Calu3 (cell line): ENCODE measurements at regions of chr10 and their contacts with region 1.

Region 1: DNA sequence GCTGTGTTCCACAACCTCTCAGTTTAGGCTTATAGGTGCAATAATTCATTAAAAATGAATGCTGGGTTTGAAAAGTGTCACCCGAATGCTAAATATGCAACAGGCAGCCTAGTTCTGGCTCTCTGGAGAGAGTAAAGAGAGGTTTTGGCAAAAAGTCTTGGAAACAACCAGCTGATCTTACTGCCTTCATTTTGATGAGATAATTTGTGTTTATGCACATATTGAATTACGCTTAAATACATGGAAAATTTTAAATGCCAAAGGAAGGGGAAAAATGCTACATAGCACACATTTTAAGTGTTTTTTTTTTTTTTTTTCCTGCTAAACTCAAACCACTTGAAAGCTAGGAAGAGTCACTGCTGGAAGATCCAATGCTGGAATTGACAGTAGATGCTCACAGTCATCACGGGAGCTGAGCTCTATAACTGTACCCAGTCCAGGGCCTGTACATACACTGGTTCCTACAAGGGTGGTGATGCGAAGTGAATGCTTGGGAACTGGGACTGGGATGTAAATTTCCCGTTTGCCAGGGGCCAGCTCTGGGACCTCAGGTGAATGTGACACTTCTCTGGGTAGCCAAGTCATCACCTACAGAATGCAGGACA is 151.5 kb downstream of the PFKFB3 start:
- DNase-seq: no peak
- H3K4me3 Mint-ChIP-seq: no peak overlapping the region
- H3K27ac Mint-ChIP-seq: peak overlapping the region; percentile 68
- H3K4me1 Mint-ChIP-seq: peaks cover 39% of the 10 kb centered on the region
- H3K27me3 Mint-ChIP-seq: no peaks in the 10 kb centered on the region
- CTCF ChIP-seq: no peak

Region 2: DNA sequence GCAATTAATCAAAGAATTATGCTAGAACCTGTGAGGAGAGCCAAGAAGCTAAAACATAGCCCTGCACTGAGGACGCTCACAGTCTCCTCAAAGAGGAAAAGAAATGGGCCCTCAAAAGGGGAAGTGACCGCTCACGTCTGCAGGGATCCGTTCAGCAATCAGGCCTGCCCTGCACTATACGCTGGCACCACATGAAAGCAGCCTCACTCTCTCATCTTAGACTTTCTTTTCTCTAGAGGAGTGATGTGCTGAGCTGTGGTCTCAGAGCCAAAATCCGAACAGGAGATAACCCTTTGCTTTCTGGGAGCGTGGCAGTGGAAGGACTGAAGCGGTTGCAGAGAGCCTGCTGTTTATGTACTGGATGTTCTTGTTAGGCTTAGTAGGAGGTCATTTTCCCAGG is 285.8 kb before region 1 on chr10:
- CTCF ChIA-PET with region 1: no interaction called
- intact Hi-C with region 1: no loop called
- DNase-seq: no peak
- H3K4me3 Mint-ChIP-seq: no peak overlapping the region
- H3K27ac Mint-ChIP-seq: no peak overlapping the region
- H3K4me1 Mint-ChIP-seq: no peaks in the 10 kb centered on the region
- H3K27me3 Mint-ChIP-seq: peaks cover 64% of the 10 kb centered on the region
- CTCF ChIP-seq: no peak

Region 3: DNA sequence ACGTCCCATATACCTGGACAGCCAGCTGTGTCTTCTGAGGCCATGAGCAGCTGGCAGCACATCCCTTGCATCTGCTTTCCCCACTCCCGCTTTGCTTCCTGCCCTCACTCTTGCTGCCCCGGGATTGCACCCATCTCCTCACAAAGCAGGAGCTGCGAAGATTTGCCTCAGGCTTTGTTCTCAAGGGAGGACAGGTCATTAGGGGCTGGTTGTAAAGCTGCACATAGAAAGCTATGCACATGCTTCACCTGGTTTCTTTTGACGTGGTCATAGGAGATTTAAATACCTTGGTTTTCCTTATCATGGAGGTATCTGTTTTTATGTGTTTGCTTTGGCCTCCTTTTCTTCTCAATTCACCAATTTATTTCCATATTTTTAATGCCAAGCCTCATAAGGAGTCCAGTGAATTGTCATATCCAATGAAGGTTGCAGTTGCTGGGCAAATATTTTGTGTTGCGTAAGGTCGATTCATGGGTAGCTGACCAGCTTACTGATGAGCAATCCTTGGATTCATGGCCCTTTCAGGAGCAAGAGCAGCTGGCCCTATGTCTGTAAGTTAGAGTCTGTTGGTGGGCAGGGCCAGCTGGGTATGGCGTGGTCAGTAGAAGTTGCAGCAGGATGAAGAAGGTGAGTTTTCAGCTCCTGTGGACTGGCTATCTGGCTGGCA is 31.3 kb after region 1 on chr10:
- CTCF ChIA-PET with region 1: no interaction called
- intact Hi-C with region 1: loop called (anchors 2 kb)
- DNase-seq: no peak
- H3K4me3 Mint-ChIP-seq: no peak overlapping the region
- H3K27ac Mint-ChIP-seq: peak overlapping the region; percentile 45
- H3K4me1 Mint-ChIP-seq: peaks cover 72% of the 10 kb centered on the region
- H3K27me3 Mint-ChIP-seq: no peaks in the 10 kb centered on the region
- CTCF ChIP-seq: no peak